Activated T-helper 1 cell treated with anti-CD3 and anti-CD28 coated beads, Interleukin-12 subunit alpha, Interleukin-12 subunit beta, Interleukin-2, Interleukin-4 antibody, amounts not matched to agents 30 ng/mL and 10 ng/mL and 1 ng/mL, durations not matched to agents 14 hours and 24 hours and 36 hours (primary cell): ENCODE measurements at regions of chr11 and their contacts with region 1.

Region 1: GRCh38 chr11:73393479-73394380 is 17.5 kb downstream of the RELT start:
- DNase-seq: peak; percentile 55
- H3K4me3 Mint-ChIP-seq: no peak overlapping the region
- H3K27ac Mint-ChIP-seq: no peak overlapping the region
- H3K4me1 Mint-ChIP-seq: peaks cover 6% of the 10 kb centered on the region
- H3K27me3 Mint-ChIP-seq: no peaks in the 10 kb centered on the region

Region 2: DNA sequence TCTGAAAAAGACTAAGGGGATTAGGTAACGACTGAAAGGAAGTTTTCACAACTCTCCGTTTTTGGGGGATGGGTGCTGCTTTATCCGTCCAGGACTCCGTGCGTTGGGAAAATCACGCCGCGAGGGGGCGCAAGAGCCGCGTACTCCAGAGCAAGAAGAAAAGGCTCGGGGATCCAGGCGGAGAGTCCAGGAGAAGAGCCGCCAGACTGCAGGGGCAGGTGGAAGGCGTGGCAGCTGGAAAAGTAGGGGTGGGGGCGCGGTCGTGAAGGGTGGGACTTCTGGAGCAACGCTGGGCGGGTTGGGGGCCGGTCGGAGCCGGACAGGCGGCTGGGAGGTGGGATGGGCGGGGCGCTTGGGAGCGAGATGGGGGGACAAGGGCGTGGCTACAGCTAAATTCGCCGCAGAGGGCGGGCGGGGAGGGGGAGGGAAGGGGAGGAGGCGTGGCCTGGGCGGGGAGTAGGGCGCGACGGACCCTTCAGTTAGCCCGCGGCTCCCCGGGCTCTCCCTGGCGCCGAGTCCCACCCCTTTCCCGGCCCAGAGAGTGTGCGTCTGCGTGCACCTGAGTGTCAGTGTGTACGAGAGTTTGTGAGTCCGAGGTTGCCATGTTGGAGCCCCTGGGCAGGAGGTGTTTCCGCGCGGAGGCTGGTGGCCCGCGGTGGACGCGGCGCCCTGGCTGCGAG is 86.3 kb before region 1 on chr11:
- intact Hi-C with region 1: loop called (anchors 1 kb)
- DNase-seq: peak; percentile 78
- H3K4me3 Mint-ChIP-seq: peak overlapping the region; percentile 87
- H3K27ac Mint-ChIP-seq: no peak overlapping the region
- H3K4me1 Mint-ChIP-seq: peaks cover 12% of the 10 kb centered on the region
- H3K27me3 Mint-ChIP-seq: peaks cover 39% of the 10 kb centered on the region

Region 3: DNA sequence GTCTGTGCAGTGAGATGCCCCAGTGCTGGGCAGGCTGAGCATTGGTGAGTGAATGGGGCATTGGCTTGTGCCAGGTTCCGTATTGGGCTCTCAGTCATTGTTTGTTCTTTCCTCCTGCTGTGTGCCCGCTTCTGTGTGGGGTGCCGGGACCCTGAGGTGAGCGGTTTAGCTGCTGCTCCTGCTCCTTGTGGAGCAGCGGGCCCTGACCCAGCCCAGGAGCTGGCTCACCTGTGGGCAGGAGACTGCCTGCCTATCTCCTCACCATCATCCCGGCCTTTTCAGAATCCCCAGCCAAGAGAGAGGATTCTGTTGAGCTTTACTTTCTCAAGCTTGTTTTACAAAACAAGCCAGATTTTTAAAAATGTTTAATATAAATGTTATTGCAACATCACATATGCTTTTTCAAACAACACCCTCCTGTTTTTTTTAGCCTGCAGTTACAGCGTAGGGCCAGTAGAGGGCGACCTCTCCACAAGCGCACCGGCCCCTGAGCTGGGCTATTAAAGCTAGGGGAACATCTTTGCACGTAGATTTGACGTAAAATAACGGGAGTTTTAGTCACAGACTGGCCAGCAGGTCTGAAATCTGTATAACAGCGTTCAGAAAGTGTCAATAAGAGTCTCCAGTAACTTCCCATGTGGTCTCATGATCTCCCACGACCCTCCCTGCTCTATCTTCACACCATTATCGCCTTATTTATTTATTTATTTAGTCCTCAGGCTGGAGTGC is 42.7 kb before region 1 on chr11:
- intact Hi-C with region 1: loop called (anchors 1 kb)
- DNase-seq: peak; percentile 46
- H3K4me3 Mint-ChIP-seq: no peak overlapping the region
- H3K27ac Mint-ChIP-seq: no peak overlapping the region
- H3K4me1 Mint-ChIP-seq: peaks cover 23% of the 10 kb centered on the region
- H3K27me3 Mint-ChIP-seq: peaks cover 8% of the 10 kb centered on the region

Region 4: DNA sequence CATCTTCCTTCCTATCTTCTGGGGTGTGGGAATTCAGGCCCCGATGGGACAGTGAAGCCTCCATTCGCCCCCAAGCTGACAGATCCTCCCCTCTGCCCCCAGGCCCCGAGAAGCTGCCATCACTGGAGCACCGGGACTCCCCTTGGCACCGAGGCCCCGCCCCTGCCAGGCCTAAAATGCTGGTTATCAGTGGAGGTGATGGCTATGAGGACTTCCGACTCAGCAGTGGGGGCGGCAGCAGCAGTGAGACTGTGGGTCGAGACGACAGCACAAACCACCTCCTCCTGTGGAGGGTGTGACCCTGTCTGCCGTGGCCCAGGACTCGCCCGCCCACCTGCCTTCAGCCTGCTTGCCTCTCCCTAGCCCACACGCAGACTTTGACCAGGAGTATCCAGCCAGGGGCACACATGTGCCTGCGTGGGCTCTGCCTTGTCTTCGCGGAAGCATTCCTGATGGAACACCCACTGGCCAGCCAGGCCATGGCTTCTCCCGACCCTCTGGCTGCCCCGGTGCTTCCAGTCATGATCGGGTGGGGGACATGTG is 26.2 kb before region 1 on chr11:
- intact Hi-C with region 1: no loop called
- DNase-seq: no peak
- H3K4me3 Mint-ChIP-seq: no peak overlapping the region
- H3K27ac Mint-ChIP-seq: no peak overlapping the region
- H3K4me1 Mint-ChIP-seq: peaks cover 23% of the 10 kb centered on the region
- H3K27me3 Mint-ChIP-seq: no peaks in the 10 kb centered on the region